ENCODE measurements at regions of chr13 and their contacts with region 1.

Region 1: GRCh38 chr13:99606324-99607066 is 105.2 kb downstream of the TM9SF2 start:
- DNase-seq: peak; percentile 93
- ATAC-seq: peak; percentile 90
- H3K4me3 ChIP-seq: peak within 1 kb of the TSS; percentile 70 to 98 (median 86)
- H3K4me3 Mint-ChIP-seq: peak within 1 kb of the TSS; percentile 98
- H3K27ac ChIP-seq: peak within 1 kb of the TSS; percentile 68 to 74
- H3K27ac Mint-ChIP-seq: peak within 1 kb of the TSS; percentile 90
- H3K4me1 ChIP-seq: peaks cover 8 to 21% of the 10 kb centered on the region in 2 donors
- H3K4me1 Mint-ChIP-seq: peaks cover 37% of the 10 kb centered on the region
- H3K27me3 ChIP-seq: no peaks in the 10 kb centered on the region
- H3K27me3 Mint-ChIP-seq: no peaks in the 10 kb centered on the region
- CTCF ChIP-seq: no peak

Region 2: GRCh38 chr13:99087096-99087953 is 519.2 kb before region 1 on chr13:
- CTCF ChIA-PET with region 1: no interaction called
- POLR2A ChIA-PET with region 1: no interaction called
- intact Hi-C with region 1: loop called (anchors 1 kb)
- DNase-seq: peak; percentile 94
- ATAC-seq: peak; percentile 74
- H3K4me3 ChIP-seq: peak overlapping the region; percentile 65 to 89 (median 88)
- H3K4me3 Mint-ChIP-seq: peak overlapping the region; percentile 100
- H3K27ac ChIP-seq: peak overlapping the region; percentile 82 to 92
- H3K27ac Mint-ChIP-seq: peak overlapping the region; percentile 99
- H3K4me1 ChIP-seq: peaks cover 26 to 27% of the 10 kb centered on the region in 2 donors
- H3K4me1 Mint-ChIP-seq: peaks cover 32% of the 10 kb centered on the region
- H3K27me3 ChIP-seq: peaks cover 0 to 3% (median 0%) of the 10 kb centered on the region in 4 experiments
- H3K27me3 Mint-ChIP-seq: peaks cover 5% of the 10 kb centered on the region
- CTCF ChIP-seq: peak; percentile 42

Region 3: DNA sequence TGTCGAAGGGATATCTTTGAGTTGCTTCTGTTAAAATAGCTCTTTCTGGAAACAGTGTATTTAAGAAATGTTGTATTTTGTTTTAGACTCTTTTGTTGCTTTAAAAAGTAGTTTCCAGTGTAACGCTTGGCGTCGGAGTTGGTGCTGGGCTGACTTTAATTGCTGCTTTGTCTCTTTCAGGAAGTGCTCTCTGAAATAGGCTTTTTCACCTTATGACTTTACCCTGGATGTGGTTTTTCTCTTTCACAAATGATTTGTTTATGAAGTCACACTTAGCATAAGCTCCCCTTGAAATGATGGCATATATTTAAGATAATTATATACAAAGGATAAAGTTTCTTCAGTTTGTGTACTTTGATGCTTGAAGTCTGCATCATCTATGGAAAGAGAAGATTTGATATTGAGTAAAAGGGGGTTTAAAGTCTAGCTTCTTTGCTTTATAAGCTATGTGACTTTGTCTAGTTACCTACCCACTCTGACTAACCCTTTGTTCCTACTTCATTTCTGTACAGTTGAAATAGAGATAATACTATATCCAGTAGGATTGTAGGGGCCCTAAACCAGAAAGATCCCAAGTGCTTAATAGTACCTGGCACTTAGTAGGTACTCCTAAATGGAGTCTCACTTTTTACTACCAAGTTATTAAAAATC is 348.2 kb before region 1 on chr13 and contains the start of gene GPR18:
- CTCF ChIA-PET with region 1: no interaction called
- POLR2A ChIA-PET with region 1: no interaction called
- intact Hi-C with region 1: loop called (anchors 10 kb)
- DNase-seq: peak; percentile 75
- ATAC-seq: peak; percentile 66
- H3K4me3 ChIP-seq: peak within 1 kb of the TSS; percentile 60 to 98 (median 79)
- H3K4me3 Mint-ChIP-seq: peak within 1 kb of the TSS; percentile 98
- H3K27ac ChIP-seq: peak within 1 kb of the TSS; percentile 86 to 90
- H3K27ac Mint-ChIP-seq: peak within 1 kb of the TSS; percentile 96
- H3K4me1 ChIP-seq: peaks cover 57 to 68% of the 10 kb centered on the region in 2 donors
- H3K4me1 Mint-ChIP-seq: peaks cover 81% of the 10 kb centered on the region
- H3K27me3 ChIP-seq: no peaks in the 10 kb centered on the region
- H3K27me3 Mint-ChIP-seq: no peaks in the 10 kb centered on the region
- CTCF ChIP-seq: no peak
- total RNA-seq, gene GPR18: 17.6 and 19.1 TPM in 2 replicates

Region 4: DNA sequence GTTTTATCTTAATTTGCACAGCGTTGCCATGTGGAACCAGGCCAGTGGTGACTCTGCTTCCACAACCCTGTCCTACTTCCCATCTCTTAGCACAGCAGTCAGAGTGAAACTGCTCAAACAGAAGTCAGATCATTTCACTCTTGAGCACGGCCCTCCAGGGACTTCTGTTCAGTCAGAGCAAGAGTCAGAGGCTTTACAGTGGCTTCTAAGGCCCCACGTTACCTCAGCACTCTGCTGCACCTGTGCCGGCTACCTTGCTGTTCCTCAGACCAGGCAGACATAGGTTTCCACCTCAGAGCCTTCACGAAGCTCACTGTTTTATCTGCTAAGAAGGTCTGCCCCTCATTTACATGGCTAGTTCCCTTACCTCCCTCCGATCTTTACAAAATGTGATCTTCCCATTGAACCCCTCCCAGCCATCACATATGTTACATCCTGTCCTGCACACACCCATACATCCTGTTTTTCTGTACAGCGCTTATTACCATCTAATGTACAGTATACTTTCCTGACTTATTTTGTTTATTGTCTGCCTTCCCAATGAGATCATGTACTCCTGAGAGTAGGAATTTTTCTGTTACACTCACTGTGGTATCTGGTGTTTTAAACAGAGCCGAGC is 63.6 kb before region 1 on chr13:
- CTCF ChIA-PET with region 1: interaction called, 5 read pairs
- POLR2A ChIA-PET with region 1: interaction called, 4 read pairs
- intact Hi-C with region 1: loop called (anchors 1 kb)
- DNase-seq: peak; percentile 93
- ATAC-seq: peak; percentile 97
- H3K4me3 ChIP-seq: peak overlapping the region in 2 of 5 experiments; percentile 10 to 49
- H3K4me3 Mint-ChIP-seq: peak overlapping the region; percentile 56
- H3K27ac ChIP-seq: peak overlapping the region; percentile 83 to 89
- H3K27ac Mint-ChIP-seq: peak overlapping the region; percentile 89
- H3K4me1 ChIP-seq: peaks cover 31 to 53% of the 10 kb centered on the region in 2 donors
- H3K4me1 Mint-ChIP-seq: peaks cover 50% of the 10 kb centered on the region
- H3K27me3 ChIP-seq: no peaks in the 10 kb centered on the region
- H3K27me3 Mint-ChIP-seq: no peaks in the 10 kb centered on the region
- CTCF ChIP-seq: no peak

Region 5: GRCh38 chr13:100088644-100089464 is 482.4 kb after region 1 on chr13 and contains the start of gene PCCA:
- CTCF ChIA-PET with region 1: no interaction called
- POLR2A ChIA-PET with region 1: no interaction called
- intact Hi-C with region 1: loop called (anchors 2 kb)
- DNase-seq: peak; percentile 76
- ATAC-seq: peak; percentile 94
- H3K4me3 ChIP-seq: peak within 1 kb of the TSS; percentile 56 to 90 (median 72)
- H3K4me3 Mint-ChIP-seq: peak within 1 kb of the TSS; percentile 94
- H3K27ac ChIP-seq: peak within 1 kb of the TSS in 1 of 2 donors; percentile 65
- H3K27ac Mint-ChIP-seq: peak within 1 kb of the TSS; percentile 75
- H3K4me1 ChIP-seq: peaks cover 10 to 15% of the 10 kb centered on the region in 2 donors
- H3K4me1 Mint-ChIP-seq: peaks cover 23% of the 10 kb centered on the region
- H3K27me3 ChIP-seq: no peaks in the 10 kb centered on the region
- H3K27me3 Mint-ChIP-seq: no peaks in the 10 kb centered on the region
- CTCF ChIP-seq: no peak
- total RNA-seq, gene PCCA: 17.4 and 20.7 TPM in 2 replicates

Region 6: GRCh38 chr13:100674848-100675660 is 1068.6 kb after region 1 on chr13:
- CTCF ChIA-PET with region 1: no interaction called
- POLR2A ChIA-PET with region 1: no interaction called
- intact Hi-C with region 1: loop called (anchors 5 kb)
- DNase-seq: peak; percentile 98
- ATAC-seq: peak; percentile 93
- H3K4me3 ChIP-seq: peak overlapping the region; percentile 55 to 84 (median 76)
- H3K4me3 Mint-ChIP-seq: peak overlapping the region; percentile 91
- H3K27ac ChIP-seq: peak overlapping the region in 1 of 2 donors; percentile 48
- H3K27ac Mint-ChIP-seq: peak overlapping the region; percentile 89
- H3K4me1 ChIP-seq: peaks cover 13 to 19% of the 10 kb centered on the region in 2 donors
- H3K4me1 Mint-ChIP-seq: peaks cover 13% of the 10 kb centered on the region
- H3K27me3 ChIP-seq: no peaks in the 10 kb centered on the region
- H3K27me3 Mint-ChIP-seq: peaks cover 9% of the 10 kb centered on the region
- CTCF ChIP-seq: peak; percentile 25